ENCODE measurements at regions of chr6 and their contacts with region 1.

Region 1: DNA sequence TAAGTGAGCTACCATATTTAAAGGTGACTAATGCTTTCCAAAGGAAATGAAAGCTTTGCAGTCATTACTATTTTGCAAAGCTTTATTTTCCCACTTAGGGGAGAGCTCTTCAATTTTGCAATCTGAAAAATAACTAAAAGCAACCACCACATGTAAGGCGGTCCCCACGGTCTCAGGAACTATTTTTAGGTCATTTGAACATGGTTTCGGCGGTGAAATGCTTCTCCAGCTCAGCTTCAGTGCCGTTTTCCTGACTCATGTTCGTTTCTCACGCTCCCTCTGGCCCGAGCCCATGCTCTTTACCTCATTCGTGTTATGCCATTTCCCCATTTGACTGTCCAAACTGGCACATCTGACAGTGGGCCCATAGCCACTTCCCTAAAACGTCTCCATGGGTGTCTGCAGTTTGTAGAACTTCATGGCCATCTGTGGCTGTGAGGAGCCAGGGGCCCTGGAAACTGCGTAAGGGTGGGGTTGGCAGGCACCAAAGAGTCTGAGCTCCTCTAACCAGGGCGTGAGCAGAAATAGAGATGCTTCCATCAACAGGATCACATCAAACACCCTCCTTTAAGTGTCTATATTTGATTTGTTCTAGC is 46.5 kb downstream of the ADTRP start:
- DNase-seq: peak; percentile 87
- H3K4me3 Mint-ChIP-seq: peak overlapping the region; percentile 3
- H3K27ac Mint-ChIP-seq: peak overlapping the region; percentile 92
- H3K4me1 Mint-ChIP-seq: peaks cover 63% of the 10 kb centered on the region
- H3K27me3 Mint-ChIP-seq: no peaks in the 10 kb centered on the region

Region 2: DNA sequence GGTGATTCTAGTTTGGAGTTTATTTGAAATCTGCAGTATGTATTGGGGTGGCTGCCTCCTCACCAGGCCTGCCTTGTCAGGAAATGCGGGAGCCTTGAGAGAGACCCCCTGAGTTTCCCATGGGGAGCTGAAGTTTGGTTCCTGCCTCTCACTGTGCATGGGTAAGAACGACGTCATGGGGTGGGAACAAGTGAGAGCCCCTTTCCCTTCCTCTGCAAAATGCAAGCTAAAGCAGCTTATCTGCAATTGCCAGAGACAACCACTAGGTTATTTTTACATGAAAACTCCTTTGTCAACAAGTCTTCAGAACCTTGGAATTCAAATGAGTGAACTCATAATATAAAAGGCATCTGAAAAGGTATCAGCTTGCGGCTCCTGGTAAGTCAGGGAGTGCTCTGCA is 136.2 kb before region 1 on chr6:
- CTCF ChIA-PET with region 1: no interaction called
- intact Hi-C with region 1: no loop called
- DNase-seq: no peak
- H3K4me3 Mint-ChIP-seq: no peak overlapping the region
- H3K27ac Mint-ChIP-seq: no peak overlapping the region
- H3K4me1 Mint-ChIP-seq: no peaks in the 10 kb centered on the region
- H3K27me3 Mint-ChIP-seq: no peaks in the 10 kb centered on the region

Region 3: DNA sequence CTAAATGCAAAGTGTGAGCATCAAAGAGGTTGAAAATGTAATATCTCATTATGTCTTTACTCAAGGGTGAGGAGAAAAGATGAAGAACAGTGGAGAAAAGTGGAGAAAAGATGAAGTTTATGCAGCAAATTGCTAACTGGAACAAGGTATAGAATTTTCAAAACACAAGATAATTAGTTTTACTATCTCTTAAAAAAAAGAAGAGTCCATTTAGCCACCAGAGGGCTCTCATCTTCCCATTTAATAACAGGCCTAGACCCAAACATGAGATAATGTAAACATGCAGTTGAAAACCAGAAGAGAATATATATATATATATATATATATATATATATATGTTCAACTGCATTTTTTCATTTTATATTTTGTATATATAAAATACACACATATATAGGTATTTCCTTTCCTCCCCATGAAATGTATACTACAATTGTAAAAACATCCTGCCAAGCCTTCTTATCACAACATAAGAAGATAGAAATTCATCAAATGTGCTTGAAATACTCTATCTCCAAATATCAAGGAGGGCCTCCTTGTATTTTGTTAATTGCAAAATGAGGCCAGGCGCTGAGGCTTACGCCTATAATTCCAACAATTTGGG is 31.9 kb before region 1 on chr6:
- CTCF ChIA-PET with region 1: interaction called, 4 read pairs
- intact Hi-C with region 1: loop called (anchors 1 kb)
- DNase-seq: no peak
- H3K4me3 Mint-ChIP-seq: no peak overlapping the region
- H3K27ac Mint-ChIP-seq: no peak overlapping the region
- H3K4me1 Mint-ChIP-seq: peaks cover 28% of the 10 kb centered on the region
- H3K27me3 Mint-ChIP-seq: no peaks in the 10 kb centered on the region

Region 4: DNA sequence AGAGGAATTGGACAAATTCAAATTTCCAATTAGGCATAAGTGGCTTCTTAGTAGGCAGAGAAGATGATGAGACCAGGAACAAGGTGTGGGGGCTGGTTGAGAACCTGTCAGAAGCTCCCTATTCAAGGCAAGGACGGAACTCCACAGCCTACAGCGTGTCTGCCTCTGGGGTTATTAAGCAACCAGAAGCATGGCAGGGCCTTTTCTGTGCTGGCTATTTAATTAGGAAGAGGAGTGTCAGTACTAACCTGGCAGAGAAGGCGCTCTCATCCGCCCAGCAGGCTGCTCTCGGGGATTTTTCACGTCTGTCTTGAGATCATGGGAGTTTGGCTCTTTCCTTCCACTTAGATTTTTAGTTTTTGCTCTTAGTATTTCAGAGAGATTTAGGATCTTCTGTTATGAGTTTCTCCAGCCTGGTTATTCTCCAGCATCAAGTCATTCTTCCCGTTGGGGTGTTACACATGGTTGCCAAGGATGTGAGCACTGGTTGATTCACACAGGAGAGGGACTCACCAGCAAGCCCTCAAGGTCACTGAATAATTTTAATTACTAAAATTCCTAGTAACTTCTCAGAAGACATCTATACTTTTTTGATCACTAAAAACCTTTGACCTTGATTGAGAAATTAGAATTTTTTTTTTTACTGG is 22.6 kb after region 1 on chr6:
- CTCF ChIA-PET with region 1: no interaction called
- intact Hi-C with region 1: no loop called
- DNase-seq: no peak
- H3K4me3 Mint-ChIP-seq: no peak overlapping the region
- H3K27ac Mint-ChIP-seq: no peak overlapping the region
- H3K4me1 Mint-ChIP-seq: peaks cover 13% of the 10 kb centered on the region
- H3K27me3 Mint-ChIP-seq: no peaks in the 10 kb centered on the region

Region 5: DNA sequence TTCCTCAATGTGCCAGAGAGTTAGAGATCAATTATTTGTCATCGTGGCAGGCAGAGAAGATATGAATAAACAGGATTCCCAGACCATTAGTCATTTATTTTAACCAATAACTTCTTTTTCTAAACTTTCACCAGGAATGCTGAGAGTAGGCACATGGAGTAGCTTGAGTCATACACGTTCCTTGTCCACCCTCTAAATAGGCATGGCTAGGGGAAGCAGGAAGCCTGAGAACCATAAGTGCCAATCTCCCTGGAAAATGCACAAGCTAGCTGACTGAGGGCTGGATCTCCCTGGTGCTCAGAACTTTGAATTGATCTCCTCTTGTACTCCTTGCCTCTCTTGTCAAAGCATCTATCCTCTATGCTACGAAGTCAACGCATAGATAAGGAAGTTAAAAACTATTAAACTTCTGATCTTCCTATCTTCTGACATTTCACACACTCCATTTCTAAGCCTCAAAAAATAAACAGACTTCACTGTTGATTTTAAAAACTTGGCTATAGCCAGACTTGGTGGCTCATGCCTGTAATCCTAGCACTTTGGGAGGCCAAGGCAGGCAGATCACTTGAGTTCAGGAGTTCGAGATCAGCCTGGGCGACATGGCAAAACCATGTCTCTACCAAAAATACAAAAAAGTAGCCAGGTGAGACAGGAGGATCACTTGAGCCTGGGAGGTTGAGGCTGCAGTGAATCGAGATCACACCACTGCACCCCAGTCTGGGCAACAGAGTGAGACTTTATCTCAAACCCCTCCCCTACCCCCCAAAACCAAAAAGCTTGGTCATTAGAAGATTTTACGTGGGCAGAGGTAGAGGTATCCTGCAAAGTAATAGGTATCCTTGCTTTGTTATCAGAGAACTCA is 34.7 kb after region 1 on chr6:
- CTCF ChIA-PET with region 1: interaction called, 4 read pairs
- intact Hi-C with region 1: loop called (anchors 1 kb)
- DNase-seq: no peak
- H3K4me3 Mint-ChIP-seq: no peak overlapping the region
- H3K27ac Mint-ChIP-seq: no peak overlapping the region
- H3K4me1 Mint-ChIP-seq: peaks cover 30% of the 10 kb centered on the region
- H3K27me3 Mint-ChIP-seq: peaks cover 2% of the 10 kb centered on the region

Region 6: GRCh38 chr6:11785774-11786579 is 53.8 kb after region 1 on chr6:
- CTCF ChIA-PET with region 1: interaction called, 3 read pairs
- intact Hi-C with region 1: loop called (anchors 1 kb)
- DNase-seq: peak; percentile 62
- H3K4me3 Mint-ChIP-seq: no peak overlapping the region
- H3K27ac Mint-ChIP-seq: peak overlapping the region; percentile 23
- H3K4me1 Mint-ChIP-seq: peaks cover 7% of the 10 kb centered on the region
- H3K27me3 Mint-ChIP-seq: no peaks in the 10 kb centered on the region

Region 7: DNA sequence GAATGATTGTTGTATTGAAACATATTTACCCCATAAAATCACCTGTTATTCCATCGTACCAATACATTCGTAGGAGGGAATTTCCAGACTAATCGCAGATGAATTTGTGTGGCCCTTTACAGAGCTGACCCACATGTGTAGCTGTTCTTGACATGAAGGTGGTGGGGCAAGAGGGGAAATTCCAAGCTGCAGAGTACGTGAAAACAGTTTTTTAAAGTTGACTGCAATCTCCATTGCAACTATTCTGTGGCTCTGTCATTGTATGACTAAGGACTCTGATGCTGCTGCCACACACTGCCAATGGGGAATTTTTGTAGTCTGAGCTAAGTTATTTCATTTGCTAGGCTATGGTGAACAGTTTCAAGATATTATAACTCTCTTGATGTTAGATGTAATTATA is 92.9 kb after region 1 on chr6:
- CTCF ChIA-PET with region 1: no interaction called
- intact Hi-C with region 1: loop called (anchors 2 kb)
- DNase-seq: peak; percentile 55
- H3K4me3 Mint-ChIP-seq: no peak overlapping the region
- H3K27ac Mint-ChIP-seq: peak overlapping the region; percentile 65
- H3K4me1 Mint-ChIP-seq: peaks cover 11% of the 10 kb centered on the region
- H3K27me3 Mint-ChIP-seq: no peaks in the 10 kb centered on the region

Region 8: DNA sequence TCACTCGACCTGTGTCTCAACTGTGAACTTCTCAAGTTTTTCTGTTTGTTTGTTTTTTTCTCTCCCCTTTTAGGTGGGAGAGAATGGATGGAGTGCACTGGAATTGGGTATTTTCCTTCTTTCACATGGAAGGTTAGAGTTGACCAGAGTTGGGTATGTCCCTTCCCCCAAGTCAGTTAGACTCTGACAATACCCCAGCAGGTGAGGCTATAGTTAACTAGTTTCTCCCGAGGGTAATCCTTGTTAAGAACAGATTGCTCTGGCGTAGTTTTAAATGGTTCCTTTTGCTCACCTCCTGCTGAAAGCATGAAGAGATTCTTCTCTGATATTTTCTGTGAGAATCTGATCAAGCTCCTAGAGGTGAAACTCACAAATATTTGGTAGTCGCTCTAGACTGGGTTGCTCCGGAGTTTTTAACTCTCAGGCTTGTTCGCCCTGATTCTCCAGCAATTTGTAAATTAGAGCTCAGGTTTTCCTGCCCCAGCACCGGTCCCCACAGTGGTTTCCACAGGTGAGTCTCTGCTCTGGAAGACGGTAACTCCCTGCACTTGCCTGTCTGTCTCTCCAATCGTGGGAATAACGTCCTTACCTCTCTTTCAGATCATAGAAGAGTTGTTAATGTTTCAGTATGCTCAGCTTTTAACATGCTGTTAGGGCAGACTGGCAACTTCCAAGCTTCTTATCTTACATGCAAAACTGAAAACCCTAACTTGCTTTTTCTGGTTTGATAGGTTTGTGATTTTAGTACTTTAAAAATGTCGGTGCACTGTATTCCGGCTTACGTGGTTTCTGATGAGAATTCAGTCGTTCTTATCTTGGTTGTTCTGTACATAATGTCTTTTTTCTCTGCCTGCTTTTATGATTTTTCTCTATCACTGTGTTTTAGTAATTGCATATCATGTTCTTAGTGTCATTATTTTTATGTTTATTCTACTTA is 168.8 kb after region 1 on chr6:
- CTCF ChIA-PET with region 1: no interaction called
- intact Hi-C with region 1: loop called (anchors 1 kb)
- DNase-seq: no peak
- H3K4me3 Mint-ChIP-seq: peak overlapping the region; percentile 30
- H3K27ac Mint-ChIP-seq: no peak overlapping the region
- H3K4me1 Mint-ChIP-seq: peaks cover 20% of the 10 kb centered on the region
- H3K27me3 Mint-ChIP-seq: no peaks in the 10 kb centered on the region

Region 9: GRCh38 chr6:12440981-12441380 is 708.8 kb after region 1 on chr6:
- CTCF ChIA-PET with region 1: no interaction called
- intact Hi-C with region 1: no loop called
- DNase-seq: no peak
- H3K4me3 Mint-ChIP-seq: no peak overlapping the region
- H3K27ac Mint-ChIP-seq: no peak overlapping the region
- H3K4me1 Mint-ChIP-seq: peaks cover 5% of the 10 kb centered on the region
- H3K27me3 Mint-ChIP-seq: peaks cover 16% of the 10 kb centered on the region